Activated CD8-positive, alpha-beta memory T cell treated with anti-CD3 and anti-CD28 coated beads, Interleukin-2, amount 10 ng/mL, durations not matched to agents 7 days and 5 days (primary cell): ENCODE measurements at regions of chr3 and their contacts with region 1.

Region 1: DNA sequence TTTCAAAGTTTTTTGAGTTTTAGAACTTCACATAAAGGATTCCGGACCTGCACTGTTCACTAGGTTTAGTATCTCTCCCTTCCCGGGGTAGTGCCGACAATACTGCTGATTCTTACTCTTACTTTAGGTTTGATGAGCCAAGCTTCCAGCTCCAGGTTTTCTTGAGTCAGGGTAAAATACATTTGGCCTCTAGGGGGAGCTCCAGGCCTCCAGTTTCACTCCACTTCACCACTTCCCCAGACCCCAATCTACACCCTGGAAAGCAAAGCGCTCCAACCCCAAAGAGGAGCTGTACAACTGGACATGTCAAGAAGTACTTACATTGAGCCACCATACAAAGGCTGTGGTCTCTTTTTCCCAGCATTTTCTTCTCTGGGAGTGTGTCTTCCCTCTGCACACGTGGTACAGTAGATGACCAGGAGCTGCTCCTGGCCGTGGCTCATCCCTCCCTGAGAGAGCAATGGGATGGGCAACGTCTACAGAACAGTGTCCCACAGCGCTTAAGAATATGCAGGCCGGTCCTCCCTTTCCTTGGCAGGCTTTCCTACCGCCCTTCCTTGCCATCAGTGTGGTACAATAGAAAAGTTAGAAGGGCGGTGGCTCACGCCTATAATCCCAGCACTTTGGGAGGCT is 93.9 kb upstream of the CCDC80 start:
- DNase-seq: peak; percentile 79
- ATAC-seq: peak; percentile 64
- H3K4me3 Mint-ChIP-seq: no peak overlapping the region
- H3K27ac Mint-ChIP-seq: peak overlapping the region; percentile 2
- H3K4me1 Mint-ChIP-seq: peaks cover 38% of the 10 kb centered on the region
- H3K27me3 Mint-ChIP-seq: no peaks in the 10 kb centered on the region

Region 2: DNA sequence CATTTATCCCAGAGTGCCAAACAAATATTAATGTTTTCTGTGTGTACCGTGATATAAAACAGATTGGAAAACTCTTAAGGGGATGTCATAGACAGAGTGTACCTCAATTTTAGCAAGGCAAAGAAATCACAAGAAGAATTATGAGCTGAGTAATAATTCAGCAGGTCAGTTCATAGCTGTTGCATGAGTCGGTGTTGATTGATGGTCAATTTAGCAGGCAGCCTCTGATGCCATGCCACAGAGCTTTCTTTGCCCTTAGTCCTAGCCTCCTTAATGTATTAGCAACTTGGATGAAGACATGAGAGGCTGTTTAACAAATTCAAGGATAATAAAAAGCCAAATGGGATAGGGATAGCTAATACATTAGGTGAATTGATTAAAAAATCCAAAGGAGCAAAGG is 166.2 kb before region 1 on chr3:
- CTCF ChIA-PET with region 1: no interaction called
- DNase-seq: no peak
- ATAC-seq: no peak
- H3K4me3 Mint-ChIP-seq: no peak overlapping the region
- H3K27ac Mint-ChIP-seq: no peak overlapping the region
- H3K4me1 Mint-ChIP-seq: peaks cover 10% of the 10 kb centered on the region
- H3K27me3 Mint-ChIP-seq: no peaks in the 10 kb centered on the region

Region 3: DNA sequence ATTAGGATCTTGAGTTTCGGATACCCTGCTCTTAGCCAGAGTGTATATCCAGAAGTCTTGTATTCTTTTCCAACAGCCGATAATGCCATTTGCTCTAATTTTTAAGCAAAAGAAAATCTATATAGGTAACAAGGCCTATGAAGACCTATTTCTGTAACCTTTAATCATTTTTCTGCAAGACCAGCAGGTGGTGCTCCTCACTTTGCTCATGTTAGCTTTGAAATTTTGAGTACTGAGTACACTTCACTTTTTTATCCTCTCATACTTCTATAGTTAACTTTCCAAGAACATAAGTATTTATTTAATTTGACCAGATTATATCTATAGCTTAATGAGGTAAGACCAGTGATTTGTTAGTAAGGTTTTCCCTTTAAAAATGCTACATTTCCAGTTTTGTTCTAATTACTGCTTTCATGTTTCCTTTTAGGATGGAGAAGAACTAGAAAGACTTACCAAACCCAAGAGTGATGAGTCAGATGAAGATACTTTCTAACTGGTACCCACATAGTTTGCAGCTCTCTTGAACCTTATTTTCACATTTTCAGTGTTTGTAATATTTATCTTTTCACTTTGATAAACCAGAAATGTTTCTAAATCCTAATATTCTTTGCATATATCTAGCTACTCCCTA is 152.5 kb before region 1 on chr3:
- CTCF ChIA-PET with region 1: interaction called, 12 read pairs
- DNase-seq: peak; percentile 64
- ATAC-seq: peak; percentile 78
- H3K4me3 Mint-ChIP-seq: no peak overlapping the region
- H3K27ac Mint-ChIP-seq: peak overlapping the region; percentile 22
- H3K4me1 Mint-ChIP-seq: peaks cover 13% of the 10 kb centered on the region
- H3K27me3 Mint-ChIP-seq: no peaks in the 10 kb centered on the region

Region 4: GRCh38 chr3:112667599-112667998 is 67.2 kb before region 1 on chr3:
- CTCF ChIA-PET with region 1: no interaction called
- DNase-seq: no peak
- ATAC-seq: no peak
- H3K4me3 Mint-ChIP-seq: no peak overlapping the region
- H3K27ac Mint-ChIP-seq: peak overlapping the region; percentile 16
- H3K4me1 Mint-ChIP-seq: peaks cover 41% of the 10 kb centered on the region
- H3K27me3 Mint-ChIP-seq: peaks cover 3% of the 10 kb centered on the region

Region 5: GRCh38 chr3:112746675-112747280 is 11.9 kb after region 1 on chr3:
- CTCF ChIA-PET with region 1: interaction called, 15 read pairs
- DNase-seq: no peak
- ATAC-seq: no peak
- H3K4me3 Mint-ChIP-seq: no peak overlapping the region
- H3K27ac Mint-ChIP-seq: no peak overlapping the region
- H3K4me1 Mint-ChIP-seq: peaks cover 23% of the 10 kb centered on the region
- H3K27me3 Mint-ChIP-seq: no peaks in the 10 kb centered on the region

Region 6: GRCh38 chr3:112814266-112814665 is 79.4 kb after region 1 on chr3:
- CTCF ChIA-PET with region 1: interaction called, 14 read pairs
- DNase-seq: no peak
- ATAC-seq: no peak
- H3K4me3 Mint-ChIP-seq: no peak overlapping the region
- H3K27ac Mint-ChIP-seq: no peak overlapping the region
- H3K4me1 Mint-ChIP-seq: peaks cover 27% of the 10 kb centered on the region
- H3K27me3 Mint-ChIP-seq: peaks cover 5% of the 10 kb centered on the region

Region 7: DNA sequence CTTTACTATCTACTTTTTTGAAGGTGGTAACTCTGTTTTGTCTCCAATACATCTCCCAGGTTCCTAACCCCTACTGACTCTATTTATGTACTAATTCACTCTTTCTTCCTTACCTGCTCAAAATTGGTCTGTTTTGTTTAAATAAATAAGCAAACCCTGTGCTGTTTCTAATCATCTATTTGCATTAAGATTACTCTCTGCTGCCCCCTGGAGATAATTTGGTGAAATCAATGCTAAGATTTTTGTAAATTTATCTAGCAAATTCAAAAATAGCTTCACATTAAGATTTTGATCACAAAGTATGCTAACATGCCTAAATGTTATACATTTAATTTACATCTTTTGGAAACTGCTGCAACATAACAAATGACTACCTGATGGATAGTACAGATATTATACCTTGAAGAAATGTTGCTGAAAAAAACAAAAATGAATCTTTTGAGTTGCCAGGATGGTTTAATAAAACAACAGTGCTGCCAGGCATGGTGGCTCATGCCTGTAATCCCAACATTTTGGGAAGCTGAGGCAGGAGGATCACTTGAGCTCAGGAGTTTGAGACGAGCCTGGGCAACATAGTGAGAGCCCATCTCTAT is 244.5 kb after region 1 on chr3:
- CTCF ChIA-PET with region 1: interaction called, 73 read pairs
- DNase-seq: no peak
- ATAC-seq: no peak
- H3K4me3 Mint-ChIP-seq: no peak overlapping the region
- H3K27ac Mint-ChIP-seq: no peak overlapping the region
- H3K4me1 Mint-ChIP-seq: peaks cover 53% of the 10 kb centered on the region
- H3K27me3 Mint-ChIP-seq: no peaks in the 10 kb centered on the region

Region 8: GRCh38 chr3:113035387-113035982 is 300.7 kb after region 1 on chr3:
- CTCF ChIA-PET with region 1: interaction called, 12 read pairs
- DNase-seq: peak; percentile 45
- ATAC-seq: peak; percentile 84
- H3K4me3 Mint-ChIP-seq: no peak overlapping the region
- H3K27ac Mint-ChIP-seq: no peak overlapping the region
- H3K4me1 Mint-ChIP-seq: no peaks in the 10 kb centered on the region
- H3K27me3 Mint-ChIP-seq: no peaks in the 10 kb centered on the region